Left ventricle myocardium inferior (tissue), 1 donor: ENCODE measurements at regions of chr7 and their contacts with region 1.

Region 1: DNA sequence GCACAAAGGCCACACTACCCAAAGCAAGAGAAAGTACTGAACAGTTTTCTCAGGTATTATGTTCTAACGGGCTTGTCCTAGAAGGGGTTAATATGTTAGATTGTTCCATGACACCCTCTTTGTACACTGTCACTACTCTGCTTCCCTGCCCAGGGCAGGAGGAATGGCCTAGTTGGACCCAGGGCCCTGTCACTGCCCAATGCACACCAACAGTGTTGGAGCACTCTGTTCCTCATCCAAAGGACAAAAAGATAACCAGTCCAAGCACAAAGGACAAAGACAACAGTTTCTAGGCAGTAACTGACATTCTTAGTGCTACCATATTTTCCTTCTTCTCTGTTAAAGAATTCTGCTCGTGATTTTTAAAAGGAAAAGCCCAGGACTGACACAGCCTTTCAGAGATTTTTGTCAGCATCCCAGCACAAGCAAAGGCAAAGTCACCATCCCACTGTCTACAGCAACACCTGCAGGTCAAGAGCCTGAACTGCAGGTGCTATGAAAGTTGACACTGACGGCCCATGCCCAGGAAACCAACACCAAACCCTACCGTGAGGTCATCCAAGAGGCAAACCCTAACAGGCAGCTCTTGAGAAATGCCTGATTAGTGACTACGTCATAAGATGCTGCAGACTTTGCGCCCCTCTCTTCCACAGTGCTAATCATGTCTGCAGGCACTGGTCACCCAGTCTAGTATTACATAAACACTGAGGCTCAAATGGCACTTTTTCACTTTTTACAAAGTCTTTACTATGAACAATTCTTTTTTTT is 13.2 kb downstream of the NUDCD3 start:
- DNase-seq: peak; percentile 43
- H3K4me3 ChIP-seq: no peak overlapping the region
- H3K27ac ChIP-seq: peak overlapping the region; percentile 74
- H3K4me1 ChIP-seq: peaks cover 76% of the 10 kb centered on the region
- H3K27me3 ChIP-seq: no peaks in the 10 kb centered on the region
- CTCF ChIP-seq: peak; percentile 93

Region 2: GRCh38 chr7:44240983-44241510 is 236.2 kb before region 1 on chr7:
- intact Hi-C with region 1: loop called (anchors 10 kb)
- DNase-seq: peak; percentile 57
- H3K4me3 ChIP-seq: no peak overlapping the region
- H3K27ac ChIP-seq: no peak overlapping the region
- H3K4me1 ChIP-seq: peaks cover 11% of the 10 kb centered on the region
- H3K27me3 ChIP-seq: no peaks in the 10 kb centered on the region
- CTCF ChIP-seq: peak; percentile 75

Region 3: DNA sequence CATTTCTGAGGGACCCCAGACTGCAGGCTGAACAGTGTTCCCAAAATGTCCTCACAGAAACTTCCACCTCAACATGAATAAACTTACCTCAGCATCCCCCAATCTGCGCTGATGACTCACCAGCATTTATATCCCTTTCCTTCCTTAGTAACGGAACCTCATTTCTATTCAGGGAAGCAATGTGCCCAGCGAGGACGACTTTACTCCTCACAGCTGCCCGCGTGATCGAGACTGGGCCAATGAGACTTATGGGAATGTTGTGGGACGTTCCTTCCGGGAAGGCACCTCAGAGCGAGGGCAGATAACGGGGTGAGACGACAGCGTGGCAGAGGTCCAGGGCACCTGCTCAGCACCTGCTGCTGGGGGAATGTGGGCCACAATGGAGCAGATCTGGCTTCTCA is 78.7 kb before region 1 on chr7:
- intact Hi-C with region 1: loop called (anchors 10 kb)
- DNase-seq: peak; percentile 42
- H3K4me3 ChIP-seq: no peak overlapping the region
- H3K27ac ChIP-seq: peak overlapping the region; percentile 58
- H3K4me1 ChIP-seq: peaks cover 41% of the 10 kb centered on the region
- H3K27me3 ChIP-seq: no peaks in the 10 kb centered on the region
- CTCF ChIP-seq: no peak